Activated naive CD8-positive, alpha-beta T cell treated with anti-CD3 and anti-CD28 coated beads, Interleukin-2, amount 10 ng/mL, durations not matched to agents 7 days and 5 days (primary cell): ENCODE measurements at regions of chr20 and their contacts with region 1.

Region 1: GRCh38 chr20:50146732-50147662 is 6.5 kb downstream of the PEDS1 start:
- DNase-seq: peak; percentile 68
- ATAC-seq: peak; percentile 99
- H3K4me3 Mint-ChIP-seq: peak overlapping the region; percentile 84
- H3K27ac Mint-ChIP-seq: peak overlapping the region; percentile 97
- H3K4me1 Mint-ChIP-seq: peaks cover 53% of the 10 kb centered on the region
- H3K27me3 Mint-ChIP-seq: no peaks in the 10 kb centered on the region

Region 2: DNA sequence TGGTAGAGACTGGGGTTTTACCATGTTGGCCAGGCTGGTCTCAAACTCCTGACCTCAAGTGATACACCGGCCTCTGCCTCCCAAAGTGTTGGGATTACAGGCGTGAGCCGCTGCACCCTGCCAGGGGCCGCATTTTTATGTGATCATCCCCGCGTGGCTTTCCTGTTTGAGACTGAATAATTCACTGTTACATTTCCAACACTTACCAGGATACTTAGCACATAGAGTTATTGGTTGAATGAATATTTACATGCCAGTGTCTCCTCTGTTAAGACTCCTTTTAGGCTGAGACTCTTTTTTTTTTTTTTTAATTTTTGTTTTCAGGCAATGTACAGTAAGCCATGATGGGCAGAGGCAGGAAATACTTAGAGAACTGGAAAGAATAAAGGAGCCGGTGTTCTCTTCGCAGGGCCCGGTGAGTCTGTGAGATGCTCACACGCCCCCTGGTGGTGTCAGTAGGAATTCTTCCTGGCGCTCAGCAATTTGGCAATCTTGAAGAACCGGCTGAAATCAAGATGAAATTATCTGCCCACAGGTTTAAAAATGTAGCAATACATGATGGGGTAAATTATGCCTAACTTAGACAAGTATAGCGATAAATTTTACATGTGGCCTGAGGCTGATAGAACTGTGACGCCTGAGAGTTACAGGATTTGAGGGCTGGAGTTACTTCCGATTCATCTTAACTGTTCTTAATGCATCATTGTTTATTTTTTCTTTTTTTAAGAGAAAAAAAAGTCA is 218.4 kb before region 1 on chr20:
- POLR2A ChIA-PET with region 1: interaction called, 11 read pairs
- DNase-seq: peak; percentile 73
- ATAC-seq: peak; percentile 95
- H3K4me3 Mint-ChIP-seq: peak overlapping the region; percentile 58
- H3K27ac Mint-ChIP-seq: no peak overlapping the region
- H3K4me1 Mint-ChIP-seq: peaks cover 8% of the 10 kb centered on the region
- H3K27me3 Mint-ChIP-seq: peaks cover 6% of the 10 kb centered on the region

Region 3: GRCh38 chr20:50085452-50086365 is 61.3 kb before region 1 on chr20:
- POLR2A ChIA-PET with region 1: no interaction called
- DNase-seq: peak; percentile 46
- ATAC-seq: peak; percentile 75
- H3K4me3 Mint-ChIP-seq: peak overlapping the region; percentile 69
- H3K27ac Mint-ChIP-seq: peak overlapping the region; percentile 68
- H3K4me1 Mint-ChIP-seq: peaks cover 19% of the 10 kb centered on the region
- H3K27me3 Mint-ChIP-seq: no peaks in the 10 kb centered on the region

Region 4: DNA sequence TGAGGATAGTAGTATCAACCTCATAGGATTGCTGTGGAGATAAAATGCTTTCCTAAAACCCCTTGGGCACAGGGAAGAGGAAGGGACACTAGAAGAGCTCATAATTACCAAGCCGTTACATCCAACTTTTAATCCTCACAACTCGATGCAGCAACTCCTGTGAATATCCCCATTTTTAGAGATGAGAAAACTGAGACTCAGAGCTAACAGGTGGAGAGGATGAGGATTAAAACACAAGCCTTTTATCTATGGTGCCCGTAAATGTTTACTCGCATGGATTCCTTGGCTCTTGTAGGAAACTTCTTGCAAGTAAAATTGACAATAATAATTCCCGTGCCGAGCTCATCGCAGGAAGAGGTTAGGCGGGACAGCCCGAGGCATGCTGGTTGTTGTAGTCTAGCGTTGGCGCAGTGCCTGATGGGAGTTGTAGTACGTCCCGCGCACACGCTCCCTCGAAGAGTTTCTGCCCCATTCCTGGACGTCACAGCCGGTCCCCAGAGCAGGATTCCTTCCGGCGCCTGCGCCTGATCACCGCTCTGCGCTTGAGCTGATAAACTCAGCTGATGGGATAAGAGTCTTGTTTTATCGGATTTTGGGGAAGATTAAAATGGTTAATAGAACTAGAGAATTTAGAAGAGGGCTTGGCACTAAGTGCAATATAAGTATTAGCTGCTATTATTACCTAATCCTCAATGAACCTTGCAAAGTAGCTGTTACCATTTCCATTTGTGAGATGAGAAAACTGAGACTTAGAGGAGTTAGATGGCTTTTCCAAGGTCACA is 31.2 kb before region 1 on chr20:
- POLR2A ChIA-PET with region 1: interaction called, 42 read pairs
- DNase-seq: peak; percentile 84
- ATAC-seq: peak; percentile 67
- H3K4me3 Mint-ChIP-seq: peak overlapping the region; percentile 94
- H3K27ac Mint-ChIP-seq: peak overlapping the region; percentile 94
- H3K4me1 Mint-ChIP-seq: peaks cover 42% of the 10 kb centered on the region
- H3K27me3 Mint-ChIP-seq: no peaks in the 10 kb centered on the region

Region 5: DNA sequence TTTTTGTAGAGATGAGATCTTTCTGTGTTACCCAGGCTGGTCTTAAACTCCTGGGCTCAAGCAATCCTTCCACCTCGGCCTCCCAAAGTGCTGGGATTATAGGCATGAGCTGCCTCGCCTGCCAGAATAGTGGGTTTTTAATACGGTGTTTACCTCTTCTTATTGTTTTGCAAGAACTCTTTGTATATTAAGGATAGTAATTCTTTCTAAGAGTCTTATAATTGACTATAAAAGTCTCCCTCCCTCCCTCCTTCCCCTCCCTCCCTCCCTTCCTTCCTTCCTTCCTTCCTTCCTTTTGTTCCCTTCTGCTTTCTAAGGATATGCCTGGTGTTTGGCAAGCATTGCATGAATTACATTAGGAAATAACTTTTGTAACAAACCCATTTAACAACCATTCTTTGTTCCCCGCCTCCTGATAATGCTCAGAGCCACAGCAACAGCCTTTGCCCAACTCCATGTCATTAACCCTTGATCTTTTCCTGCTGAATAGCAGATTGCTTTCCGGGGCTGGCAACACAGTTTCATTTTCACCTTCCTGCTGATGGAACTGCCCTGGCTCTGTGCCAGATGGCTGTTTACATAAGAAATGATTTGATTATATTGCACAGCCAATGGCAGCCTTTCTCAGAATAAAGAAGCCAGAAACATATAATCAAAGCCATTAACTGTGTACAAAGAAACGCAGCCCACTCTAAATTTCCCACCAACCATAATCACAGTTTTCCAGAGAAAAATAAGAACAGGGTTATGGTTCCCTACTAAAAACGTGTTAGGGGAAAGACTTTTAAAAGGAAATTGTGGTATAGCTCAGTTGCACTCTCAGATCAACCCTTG is 219.5 kb after region 1 on chr20:
- POLR2A ChIA-PET with region 1: no interaction called
- DNase-seq: no peak
- ATAC-seq: peak; percentile 61
- H3K4me3 Mint-ChIP-seq: peak overlapping the region; percentile 34
- H3K27ac Mint-ChIP-seq: peak overlapping the region; percentile 17
- H3K4me1 Mint-ChIP-seq: peaks cover 8% of the 10 kb centered on the region
- H3K27me3 Mint-ChIP-seq: peaks cover 2% of the 10 kb centered on the region